ENCODE measurements at regions of chr1 and their contacts with region 1.

Region 1: GRCh38 chr1:10209905-10210810 is at the start of gene KIF1B:
- DNase-seq: peak; percentile 91 to 98 (median 96)
- ATAC-seq: peak; percentile 99
- H3K4me3 ChIP-seq: peak within 1 kb of the TSS; percentile 76
- H3K4me3 Mint-ChIP-seq: peak within 1 kb of the TSS; percentile 94
- H3K27ac ChIP-seq: no peak within 1 kb of the TSS
- H3K27ac Mint-ChIP-seq: peak within 1 kb of the TSS; percentile 82
- H3K4me1 ChIP-seq: peaks cover 17% of the 10 kb centered on the region
- H3K4me1 Mint-ChIP-seq: peaks cover 37% of the 10 kb centered on the region
- H3K27me3 ChIP-seq: no peaks in the 10 kb centered on the region
- H3K27me3 Mint-ChIP-seq: peaks cover 4% of the 10 kb centered on the region
- CTCF ChIP-seq: peak; percentile 99
- total RNA-seq, gene KIF1B: 7.9 to 9.7 TPM

Region 2: DNA sequence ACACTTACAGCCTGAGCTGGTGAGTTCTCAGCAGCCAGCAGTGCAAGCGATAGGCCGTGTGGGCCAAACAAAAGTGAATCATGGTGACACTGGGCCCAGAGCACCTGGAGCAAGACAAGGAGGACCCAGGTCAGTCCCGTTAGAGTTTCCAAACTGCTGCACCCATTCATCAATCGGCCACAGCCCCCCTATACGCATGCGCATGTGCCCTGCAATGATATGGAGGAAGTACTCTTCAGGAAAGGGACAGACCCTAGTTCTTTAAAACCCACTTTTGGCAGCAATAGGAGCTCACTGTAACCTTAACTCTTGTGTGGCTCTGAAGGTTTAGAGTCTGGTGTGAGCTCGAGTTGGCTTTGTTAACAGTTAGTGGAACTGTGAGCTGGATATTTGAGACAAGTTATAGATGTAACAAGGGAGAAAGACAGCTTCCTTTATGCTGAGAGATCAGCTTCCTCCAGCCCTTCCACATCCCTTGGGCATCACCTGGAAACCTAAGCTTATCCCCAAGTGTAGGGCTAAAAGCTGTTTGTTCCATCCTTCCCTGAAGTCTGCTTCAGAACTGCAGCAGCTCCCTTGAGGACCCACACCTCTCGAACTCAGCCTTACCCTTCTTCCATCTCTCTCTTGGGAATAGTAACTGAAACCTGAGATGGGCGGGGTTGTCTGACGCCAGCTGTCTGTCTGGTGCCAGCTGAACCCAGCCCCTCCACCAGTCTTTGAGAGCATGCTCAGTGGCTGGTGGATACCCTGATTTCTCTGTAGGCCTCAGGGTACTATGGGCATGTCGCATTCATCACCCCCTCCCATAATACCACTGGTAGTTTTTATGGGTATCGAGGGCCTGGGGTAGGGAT is 249.2 kb before region 1 on chr1:
- CTCF ChIA-PET with region 1: no interaction called
- POLR2A ChIA-PET with region 1: no interaction called
- intact Hi-C with region 1: no loop called
- DNase-seq: no peak
- ATAC-seq: no peak
- H3K4me3 ChIP-seq: no peak overlapping the region
- H3K4me3 Mint-ChIP-seq: no peak overlapping the region
- H3K27ac ChIP-seq: no peak overlapping the region
- H3K27ac Mint-ChIP-seq: no peak overlapping the region
- H3K4me1 ChIP-seq: no peaks in the 10 kb centered on the region
- H3K4me1 Mint-ChIP-seq: no peaks in the 10 kb centered on the region
- H3K27me3 ChIP-seq: no peaks in the 10 kb centered on the region
- H3K27me3 Mint-ChIP-seq: no peaks in the 10 kb centered on the region
- CTCF ChIP-seq: no peak

Region 3: DNA sequence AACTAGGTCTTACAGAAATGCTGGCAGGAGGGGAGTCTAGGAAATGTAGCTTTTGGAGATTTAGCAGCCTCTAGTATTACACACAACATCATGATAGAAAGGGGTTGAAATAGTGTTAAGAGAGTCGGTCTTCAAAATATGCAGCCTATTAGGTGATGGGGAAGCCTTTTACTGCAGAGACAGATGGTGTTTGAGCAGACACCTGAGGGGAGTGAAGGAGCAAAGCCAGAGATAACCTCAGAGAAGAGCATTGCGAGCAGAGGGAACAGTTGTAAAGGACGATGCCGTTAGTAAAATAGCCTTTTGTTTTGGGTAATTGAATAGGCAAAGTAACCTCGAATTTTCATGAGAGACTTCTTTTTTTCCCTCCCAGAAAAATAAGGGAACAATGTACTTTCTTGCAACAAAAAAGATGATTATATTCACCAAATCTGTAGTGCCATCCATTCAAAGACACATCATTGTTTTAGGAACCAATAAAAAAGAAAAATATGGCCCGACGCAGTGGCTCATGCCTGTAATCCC is 66.1 kb before region 1 on chr1:
- CTCF ChIA-PET with region 1: no interaction called
- POLR2A ChIA-PET with region 1: no interaction called
- intact Hi-C with region 1: no loop called
- DNase-seq: no peak
- ATAC-seq: no peak
- H3K4me3 ChIP-seq: no peak overlapping the region
- H3K4me3 Mint-ChIP-seq: no peak overlapping the region
- H3K27ac ChIP-seq: no peak overlapping the region
- H3K27ac Mint-ChIP-seq: no peak overlapping the region
- H3K4me1 ChIP-seq: no peaks in the 10 kb centered on the region
- H3K4me1 Mint-ChIP-seq: no peaks in the 10 kb centered on the region
- H3K27me3 ChIP-seq: no peaks in the 10 kb centered on the region
- H3K27me3 Mint-ChIP-seq: no peaks in the 10 kb centered on the region
- CTCF ChIP-seq: no peak

Region 4: DNA sequence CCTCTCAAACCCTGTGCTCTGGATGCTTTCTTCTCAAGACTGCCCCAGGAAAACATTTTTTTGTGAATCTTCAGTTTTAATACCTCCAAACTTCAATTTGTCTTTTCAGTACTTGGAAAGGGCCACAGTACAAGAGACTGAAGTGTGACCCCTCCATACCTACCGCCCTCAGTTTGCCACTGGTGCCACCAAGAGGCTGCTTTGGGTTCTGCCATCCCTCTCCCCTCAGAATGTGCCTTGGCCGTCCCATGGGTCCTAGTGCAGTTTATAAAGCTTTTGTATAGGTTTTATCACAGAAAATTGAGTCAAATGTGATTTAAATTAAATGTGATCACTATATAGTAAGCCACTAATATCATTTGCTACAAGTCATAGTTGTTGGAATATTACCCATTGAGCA is 127.9 kb after region 1 on chr1:
- CTCF ChIA-PET with region 1: interaction called, 3 read pairs
- POLR2A ChIA-PET with region 1: no interaction called
- intact Hi-C with region 1: loop called in 1 of 2 experiments (anchors 5 kb)
- DNase-seq: peak in 7 of 14 experiments; percentile 2 to 46 (median 27)
- ATAC-seq: no peak
- H3K4me3 ChIP-seq: no peak overlapping the region
- H3K4me3 Mint-ChIP-seq: no peak overlapping the region
- H3K27ac ChIP-seq: no peak overlapping the region
- H3K27ac Mint-ChIP-seq: no peak overlapping the region
- H3K4me1 ChIP-seq: no peaks in the 10 kb centered on the region
- H3K4me1 Mint-ChIP-seq: no peaks in the 10 kb centered on the region
- H3K27me3 ChIP-seq: no peaks in the 10 kb centered on the region
- H3K27me3 Mint-ChIP-seq: no peaks in the 10 kb centered on the region
- CTCF ChIP-seq: peak; percentile 23

Region 5: DNA sequence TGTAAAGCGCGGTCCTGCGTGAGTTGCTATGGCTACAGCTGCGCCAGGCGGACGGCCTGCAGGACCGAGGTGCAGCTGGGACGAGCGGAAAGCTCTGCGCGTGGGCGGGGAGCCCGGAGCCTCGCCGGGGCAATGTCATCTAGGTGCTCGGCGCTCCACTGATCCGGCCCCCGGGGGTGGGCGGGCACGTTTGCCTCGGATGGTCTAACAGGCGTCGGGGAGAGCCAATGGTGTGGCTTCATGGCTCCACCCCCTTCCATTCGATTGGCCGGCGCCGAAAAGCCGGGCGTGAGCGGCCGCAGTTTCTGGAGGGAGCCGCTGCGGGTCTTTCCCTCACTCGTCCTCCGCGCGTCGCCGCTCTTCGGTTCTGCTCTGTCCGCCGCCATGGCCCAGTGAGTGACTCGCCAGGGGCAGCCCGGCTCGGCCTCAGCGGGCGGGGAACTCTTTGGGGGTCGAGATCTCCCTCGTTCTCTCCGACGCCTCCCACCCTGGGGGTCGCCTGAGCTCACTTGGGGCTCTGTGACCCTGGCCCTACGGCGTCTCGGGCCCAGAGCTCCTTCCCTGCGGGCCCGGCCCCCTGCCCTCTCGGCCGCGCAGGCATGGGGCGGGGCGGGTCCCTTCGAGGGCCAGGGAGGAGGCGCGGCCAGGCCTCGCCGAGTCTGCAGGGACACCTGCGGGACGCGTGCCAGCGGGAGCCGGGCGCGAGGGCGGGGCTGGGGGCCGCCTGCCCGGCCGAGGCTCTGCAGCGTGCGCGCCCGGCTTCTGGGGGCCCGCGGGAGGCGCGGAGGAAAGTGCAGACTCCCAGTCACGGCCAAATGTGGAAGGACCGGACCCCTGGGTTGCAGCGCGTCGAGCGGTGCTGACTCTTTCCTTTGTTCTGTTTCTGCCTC is 188.8 kb after region 1 on chr1 and contains the start of gene PGD:
- CTCF ChIA-PET with region 1: interaction called, 11 read pairs
- POLR2A ChIA-PET with region 1: interaction called, 5 read pairs
- intact Hi-C with region 1: loop called in 1 of 2 experiments (anchors 1 kb)
- DNase-seq: peak; percentile 92 to 98 (median 96)
- ATAC-seq: peak; percentile 97
- H3K4me3 ChIP-seq: peak within 1 kb of the TSS; percentile 96
- H3K4me3 Mint-ChIP-seq: peak within 1 kb of the TSS; percentile 98
- H3K27ac ChIP-seq: peak within 1 kb of the TSS; percentile 56 to 70
- H3K27ac Mint-ChIP-seq: peak within 1 kb of the TSS; percentile 79
- H3K4me1 ChIP-seq: peaks cover 21% of the 10 kb centered on the region
- H3K4me1 Mint-ChIP-seq: peaks cover 20% of the 10 kb centered on the region
- H3K27me3 ChIP-seq: no peaks in the 10 kb centered on the region
- H3K27me3 Mint-ChIP-seq: no peaks in the 10 kb centered on the region
- CTCF ChIP-seq: no peak
- total RNA-seq, gene PGD: 16.7 to 17.4 TPM